ENCODE measurements at regions of chr19 and their contacts with region 1.

Region 1: DNA sequence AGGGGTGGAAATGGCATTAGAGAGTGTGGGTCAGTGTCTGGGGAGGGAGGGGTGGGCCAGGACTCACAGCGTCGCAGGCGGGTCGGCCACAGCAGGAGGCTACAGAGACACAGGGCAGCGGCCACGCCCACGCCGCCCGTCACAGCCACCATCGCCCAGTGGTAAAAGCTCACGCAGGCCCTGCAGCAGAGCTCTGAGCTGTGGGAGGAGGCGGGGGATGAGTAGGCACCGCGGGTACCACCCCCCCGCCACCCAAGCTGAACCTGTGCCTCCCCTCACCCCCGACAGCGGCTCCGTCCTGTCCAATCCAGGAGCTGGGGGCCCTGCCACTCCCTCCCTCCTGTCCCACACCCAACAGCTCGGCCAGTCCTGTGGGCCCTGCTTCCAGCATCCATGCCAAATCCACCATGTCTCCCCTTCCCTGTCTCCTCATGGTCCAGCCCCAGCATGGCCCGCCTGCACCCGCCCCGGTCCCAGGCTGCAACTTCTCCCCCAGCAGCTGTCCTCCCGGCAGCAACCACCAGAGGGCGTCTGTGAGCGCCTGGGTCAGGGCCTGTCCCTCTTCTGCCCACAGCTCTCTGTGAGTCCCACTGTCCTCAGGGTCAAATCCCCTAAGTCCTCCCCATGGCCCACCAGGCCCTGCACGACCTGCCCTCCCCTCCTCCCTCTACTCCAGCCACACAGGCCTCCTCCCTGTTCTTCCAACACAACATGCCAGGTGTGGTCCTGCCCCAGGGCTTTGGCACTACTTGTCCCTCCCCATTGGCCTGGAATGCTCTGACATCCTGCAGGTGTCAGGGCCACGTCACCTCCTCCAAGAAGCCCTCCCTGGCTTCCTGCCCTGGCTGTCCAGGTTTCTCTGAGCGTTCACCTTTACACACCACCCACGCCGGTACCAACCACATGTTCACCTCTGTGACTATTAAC is 6.0 kb downstream of the TEKTIP1 start:
- DNase-seq: peak; percentile 61
- H3K4me3 ChIP-seq: no peak overlapping the region
- H3K27ac ChIP-seq: no peak overlapping the region
- H3K4me1 ChIP-seq: no peaks in the 10 kb centered on the region
- H3K27me3 ChIP-seq: no peaks in the 10 kb centered on the region
- CTCF ChIP-seq: peak; percentile 97

Region 2: DNA sequence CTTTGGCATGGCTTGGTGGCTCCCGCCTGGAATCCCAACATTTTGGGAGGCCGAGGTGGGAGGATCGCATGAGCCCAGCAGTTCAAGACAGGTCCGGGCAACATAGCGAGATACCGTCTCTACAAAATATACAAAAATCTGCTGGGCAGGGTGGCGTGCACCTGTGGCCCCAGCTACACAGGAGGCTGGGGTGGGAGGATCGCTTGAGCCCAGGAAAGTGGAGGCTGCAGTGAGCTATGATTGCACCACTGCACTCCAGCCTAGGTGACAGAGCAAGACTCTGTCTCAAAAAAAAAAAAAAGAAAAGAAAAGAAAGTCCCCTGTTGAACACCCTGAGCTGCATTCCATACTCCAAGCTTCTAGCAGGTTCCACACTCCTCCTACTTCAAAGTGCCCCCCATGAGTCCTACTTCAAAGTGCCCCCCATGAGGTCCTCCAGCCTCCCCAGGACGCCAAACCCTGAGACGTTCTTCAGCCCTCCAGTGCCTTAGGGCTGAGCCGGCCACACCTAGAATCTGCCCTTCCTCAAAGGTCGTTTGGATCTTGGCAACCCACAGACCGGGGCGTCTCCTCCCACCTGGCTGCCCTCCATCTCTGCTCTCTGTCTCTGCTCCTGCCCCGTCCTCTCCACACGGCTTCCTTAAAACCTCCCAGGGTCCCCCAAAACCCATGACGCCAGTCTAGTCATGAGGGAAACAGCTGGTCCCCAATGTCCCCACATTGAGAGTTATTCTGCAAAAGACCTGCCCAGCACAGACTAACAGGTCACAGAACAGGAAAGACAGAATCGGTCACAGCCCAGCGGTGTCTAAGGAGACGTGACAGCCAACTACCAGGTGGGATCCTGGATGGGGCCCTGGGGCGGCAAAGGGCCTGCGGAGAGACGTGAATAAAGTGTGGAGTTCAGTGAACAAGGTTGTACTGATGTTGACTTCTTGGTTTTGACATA is 167.9 kb after region 1 on chr19:
- CTCF ChIA-PET with region 1: interaction called, 10 read pairs
- POLR2A ChIA-PET with region 1: no interaction called
- intact Hi-C with region 1: loop called (anchors 10 kb)
- DNase-seq: no peak
- H3K4me3 ChIP-seq: no peak overlapping the region
- H3K27ac ChIP-seq: no peak overlapping the region
- H3K4me1 ChIP-seq: peaks cover 7% of the 10 kb centered on the region
- H3K27me3 ChIP-seq: no peaks in the 10 kb centered on the region
- CTCF ChIP-seq: no peak

Measured in A673 (cell line).